ENCODE measurements at regions of chr22 and their contacts with region 1.

Region 1: GRCh38 chr22:17628304-17629166 is at the start of gene ATP6V1E1:
- DNase-seq: peak; percentile 98
- H3K4me3 Mint-ChIP-seq: peak within 1 kb of the TSS; percentile 98
- H3K27ac Mint-ChIP-seq: peak within 1 kb of the TSS; percentile 92
- H3K4me1 Mint-ChIP-seq: peaks cover 26% of the 10 kb centered on the region
- H3K27me3 Mint-ChIP-seq: no peaks in the 10 kb centered on the region
- total RNA-seq, gene ATP6V1E1: 74.5 to 75.5 TPM

Region 2: DNA sequence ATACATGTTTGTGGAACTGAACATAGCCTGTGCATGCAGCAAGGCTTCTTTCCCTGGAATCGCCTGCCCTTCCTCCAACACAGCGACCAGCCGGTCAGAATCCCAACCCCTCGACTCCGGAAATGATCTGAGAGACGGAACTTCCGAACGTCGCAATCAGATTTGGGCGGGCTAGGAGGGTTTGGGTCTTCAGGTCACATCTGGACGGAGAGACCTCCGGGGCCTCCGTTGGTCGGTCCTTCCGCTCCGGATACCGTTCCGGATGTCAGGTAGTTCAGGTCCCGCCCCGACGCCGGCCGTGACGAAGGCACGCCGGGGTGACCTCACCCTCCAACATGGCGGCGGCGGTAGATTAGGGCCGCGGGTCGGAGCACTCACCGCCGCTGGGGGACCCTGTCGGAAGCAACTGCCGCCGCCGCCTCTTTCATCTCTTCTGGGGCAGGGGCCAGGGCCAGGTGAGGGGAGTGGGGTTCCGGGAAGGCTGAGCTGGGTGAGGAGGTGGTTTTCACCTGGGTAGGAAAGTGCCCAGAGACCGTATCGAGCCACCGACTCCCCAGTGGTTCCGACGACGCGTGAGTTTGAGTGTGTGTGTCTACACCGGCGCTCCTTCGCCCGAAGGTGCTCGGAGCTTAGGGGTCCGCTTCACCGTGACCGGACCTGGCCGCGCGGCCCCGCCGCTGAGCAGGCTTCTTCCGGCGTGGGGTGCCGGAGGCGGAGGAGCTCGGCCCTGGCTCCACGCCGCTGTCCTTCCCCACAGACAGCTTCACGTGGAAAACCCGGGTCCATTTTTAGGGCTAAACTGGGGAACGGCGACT is 10.1 kb after region 1 on chr22 and contains the start of gene BCL2L13:
- CTCF ChIA-PET with region 1: no interaction called
- intact Hi-C with region 1: loop called (anchors 1 kb)
- DNase-seq: peak; percentile 94
- H3K4me3 Mint-ChIP-seq: peak within 1 kb of the TSS; percentile 85
- H3K27ac Mint-ChIP-seq: peak within 1 kb of the TSS; percentile 89
- H3K4me1 Mint-ChIP-seq: peaks cover 22% of the 10 kb centered on the region
- H3K27me3 Mint-ChIP-seq: no peaks in the 10 kb centered on the region
- total RNA-seq, gene BCL2L13: 32.2 to 32.6 TPM